Naive thymus-derived CD4-positive, alpha-beta T cell (primary cell): ENCODE measurements at regions of chr11 and their contacts with region 1.

Region 1: DNA sequence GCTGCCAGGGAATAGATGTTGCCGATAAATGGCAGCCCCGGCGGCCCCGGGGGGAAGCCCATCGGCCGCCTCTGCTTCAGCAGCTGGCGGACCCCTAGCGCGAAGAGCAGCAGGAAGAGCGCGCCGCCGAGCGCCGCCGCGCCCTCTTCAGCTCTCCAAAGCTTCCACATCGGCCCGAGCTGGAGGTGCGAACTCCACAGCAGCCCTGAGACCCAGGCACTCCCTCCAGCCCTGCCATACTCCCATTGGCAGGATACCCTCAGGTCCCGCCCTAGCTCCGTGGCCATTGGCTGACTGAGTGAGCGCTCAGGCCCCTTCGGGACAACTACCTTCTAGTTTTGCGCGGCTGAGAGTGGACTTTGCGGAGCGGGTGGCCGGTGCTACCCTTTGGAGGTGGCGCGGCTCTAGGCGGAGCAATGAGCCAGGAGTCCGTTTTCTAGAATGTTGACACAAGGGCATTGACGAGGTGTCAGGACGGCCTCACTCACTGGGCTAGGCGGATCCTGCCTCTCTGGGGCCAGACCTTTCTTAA is at the start of gene CYP2R1:
- DNase-seq: peak in 8 of 9 donors; percentile 76 to 91 (median 89)
- ATAC-seq: peak; percentile 93
- H3K4me3 ChIP-seq: peak within 1 kb of the TSS; percentile 83
- H3K4me3 Mint-ChIP-seq: peak within 1 kb of the TSS; percentile 88 to 99 (median 96)
- H3K27ac ChIP-seq: peak within 1 kb of the TSS; percentile 80
- H3K27ac Mint-ChIP-seq: peak within 1 kb of the TSS; percentile 91 to 98 (median 96)
- H3K4me1 ChIP-seq: peaks cover 3 to 27% of the 10 kb centered on the region in 2 donors
- H3K4me1 Mint-ChIP-seq: peaks cover 17 to 66% (median 44%) of the 10 kb centered on the region in 7 donors
- H3K27me3 ChIP-seq: no peaks in the 10 kb centered on the region
- H3K27me3 Mint-ChIP-seq: no peaks in the 10 kb centered on the region
- total RNA-seq, gene CYP2R1: 13.3 to 18.6 (median 14.7) TPM

Region 2: GRCh38 chr11:13276832-13277767 is 1615.0 kb before region 1 on chr11:
- CTCF ChIA-PET with region 1: no interaction called
- POLR2A ChIA-PET with region 1: no interaction called
- intact Hi-C with region 1: loop called in 1 of 2 experiments (anchors 2 kb)
- DNase-seq: peak; percentile 93 to 97 (median 96)
- ATAC-seq: peak; percentile 91
- H3K4me3 ChIP-seq: peak overlapping the region; percentile 80
- H3K4me3 Mint-ChIP-seq: peak overlapping the region; percentile 95 to 99 (median 97)
- H3K27ac ChIP-seq: peak overlapping the region; percentile 81
- H3K27ac Mint-ChIP-seq: peak overlapping the region; percentile 72 to 97 (median 91)
- H3K4me1 ChIP-seq: peaks cover 19 to 29% of the 10 kb centered on the region in 2 donors
- H3K4me1 Mint-ChIP-seq: peaks cover 32 to 47% (median 40%) of the 10 kb centered on the region in 7 donors
- H3K27me3 ChIP-seq: no peaks in the 10 kb centered on the region
- H3K27me3 Mint-ChIP-seq: peaks cover 0 to 51% (median 0%) of the 10 kb centered on the region in 5 donors

Region 3: GRCh38 chr11:14358729-14359439 is 533.2 kb before region 1 on chr11 and contains the start of gene RRAS2:
- CTCF ChIA-PET with region 1: no interaction called
- POLR2A ChIA-PET with region 1: no interaction called
- intact Hi-C with region 1: loop called (anchors 2 to 5 kb)
- DNase-seq: peak; percentile 67 to 81 (median 78)
- ATAC-seq: peak; percentile 96
- H3K4me3 ChIP-seq: peak within 1 kb of the TSS; percentile 61
- H3K4me3 Mint-ChIP-seq: peak within 1 kb of the TSS; percentile 91 to 98 (median 95)
- H3K27ac ChIP-seq: peak within 1 kb of the TSS; percentile 72
- H3K27ac Mint-ChIP-seq: peak within 1 kb of the TSS; percentile 66 to 93 (median 86)
- H3K4me1 ChIP-seq: peaks cover 7 to 8% of the 10 kb centered on the region in 2 donors
- H3K4me1 Mint-ChIP-seq: peaks cover 25 to 55% (median 30%) of the 10 kb centered on the region in 7 donors
- H3K27me3 ChIP-seq: no peaks in the 10 kb centered on the region
- H3K27me3 Mint-ChIP-seq: peaks cover 0 to 6% (median 0%) of the 10 kb centered on the region in 5 donors
- total RNA-seq, gene RRAS2: 12.6 to 55.3 (median 22.2) TPM

Region 4: GRCh38 chr11:14519917-14520746 is 372.0 kb before region 1 on chr11 and contains the start of gene PSMA1:
- CTCF ChIA-PET with region 1: interaction called, 4 read pairs
- POLR2A ChIA-PET with region 1: interaction called, 15 read pairs
- intact Hi-C with region 1: loop called (anchors 1 kb)
- DNase-seq: peak; percentile 72 to 95 (median 89)
- ATAC-seq: peak; percentile 96
- H3K4me3 ChIP-seq: peak within 1 kb of the TSS; percentile 70
- H3K4me3 Mint-ChIP-seq: peak within 1 kb of the TSS; percentile 86 to 99 (median 97)
- H3K27ac ChIP-seq: peak within 1 kb of the TSS; percentile 96
- H3K27ac Mint-ChIP-seq: peak within 1 kb of the TSS; percentile 93 to 99 (median 96)
- H3K4me1 ChIP-seq: peaks cover 14 to 16% of the 10 kb centered on the region in 2 donors
- H3K4me1 Mint-ChIP-seq: peaks cover 15 to 43% (median 38%) of the 10 kb centered on the region in 7 donors
- H3K27me3 ChIP-seq: no peaks in the 10 kb centered on the region
- H3K27me3 Mint-ChIP-seq: no peaks in the 10 kb centered on the region
- total RNA-seq, gene PSMA1: 103 to 253 (median 120) TPM

Region 5: GRCh38 chr11:14578541-14578956 is 313.6 kb before region 1 on chr11:
- CTCF ChIA-PET with region 1: no interaction called
- POLR2A ChIA-PET with region 1: interaction called, 3 read pairs
- intact Hi-C with region 1: loop called in 1 of 2 experiments (anchors 1 kb)
- DNase-seq: peak in 8 of 9 donors; percentile 57 to 95 (median 92)
- ATAC-seq: peak; percentile 99
- H3K4me3 ChIP-seq: peak overlapping the region; percentile 22
- H3K4me3 Mint-ChIP-seq: peak overlapping the region; percentile 40 to 85 (median 62)
- H3K27ac ChIP-seq: peak overlapping the region; percentile 79
- H3K27ac Mint-ChIP-seq: peak overlapping the region; percentile 92 to 96 (median 95)
- H3K4me1 ChIP-seq: peaks cover 39 to 41% of the 10 kb centered on the region in 2 donors
- H3K4me1 Mint-ChIP-seq: peaks cover 46 to 71% (median 63%) of the 10 kb centered on the region in 7 donors
- H3K27me3 ChIP-seq: no peaks in the 10 kb centered on the region
- H3K27me3 Mint-ChIP-seq: no peaks in the 10 kb centered on the region

Region 6: GRCh38 chr11:14722496-14722895 is 169.6 kb before region 1 on chr11:
- CTCF ChIA-PET with region 1: no interaction called
- POLR2A ChIA-PET with region 1: no interaction called
- intact Hi-C with region 1: no loop called
- DNase-seq: no peak
- ATAC-seq: no peak
- H3K4me3 ChIP-seq: no peak overlapping the region
- H3K4me3 Mint-ChIP-seq: no peak overlapping the region
- H3K27ac ChIP-seq: no peak overlapping the region
- H3K27ac Mint-ChIP-seq: peak overlapping the region in 2 of 9 donors; percentile 58 to 78
- H3K4me1 ChIP-seq: peaks cover 2 to 10% of the 10 kb centered on the region in 2 donors
- H3K4me1 Mint-ChIP-seq: peaks cover 27 to 47% (median 45%) of the 10 kb centered on the region in 7 donors
- H3K27me3 ChIP-seq: no peaks in the 10 kb centered on the region
- H3K27me3 Mint-ChIP-seq: no peaks in the 10 kb centered on the region

Region 7: DNA sequence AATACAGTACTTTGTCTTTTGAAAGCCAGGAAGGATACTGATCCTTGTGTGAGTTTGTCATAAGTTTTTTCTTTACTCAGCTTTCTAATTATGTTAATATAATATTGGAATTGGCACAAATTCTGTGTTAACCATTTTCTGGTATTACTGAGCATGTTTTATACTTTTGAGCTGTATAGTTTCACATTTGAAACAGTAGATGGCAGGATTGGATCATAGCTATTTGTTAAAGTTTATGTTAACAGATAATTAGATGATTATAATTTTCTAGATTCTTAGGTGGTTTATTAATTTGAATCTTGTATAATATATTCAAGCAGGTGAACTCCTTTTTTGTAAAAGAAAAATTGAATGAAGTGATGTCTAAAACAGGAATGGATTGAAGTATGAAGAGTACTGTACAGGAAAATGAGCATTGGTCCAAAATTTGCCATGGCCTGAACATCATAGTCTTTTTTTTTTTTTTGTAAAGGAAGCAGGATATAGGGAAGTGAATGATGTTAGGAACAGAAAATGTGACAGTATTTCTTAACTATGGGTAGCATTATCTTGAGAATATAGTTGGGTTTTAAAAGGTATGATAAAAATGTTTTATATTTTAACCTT is 102.1 kb before region 1 on chr11:
- CTCF ChIA-PET with region 1: interaction called, 13 read pairs
- POLR2A ChIA-PET with region 1: no interaction called
- intact Hi-C with region 1: no loop called
- DNase-seq: peak in 4 of 9 donors; percentile 19 to 37 (median 36)
- ATAC-seq: peak; percentile 42
- H3K4me3 ChIP-seq: no peak overlapping the region
- H3K4me3 Mint-ChIP-seq: no peak overlapping the region
- H3K27ac ChIP-seq: no peak overlapping the region
- H3K27ac Mint-ChIP-seq: peak overlapping the region in 7 of 9 donors; percentile 2 to 74 (median 51)
- H3K4me1 ChIP-seq: no peaks in the 10 kb centered on the region
- H3K4me1 Mint-ChIP-seq: peaks cover 4 to 39% (median 17%) of the 10 kb centered on the region in 7 donors
- H3K27me3 ChIP-seq: no peaks in the 10 kb centered on the region
- H3K27me3 Mint-ChIP-seq: no peaks in the 10 kb centered on the region

Region 8: DNA sequence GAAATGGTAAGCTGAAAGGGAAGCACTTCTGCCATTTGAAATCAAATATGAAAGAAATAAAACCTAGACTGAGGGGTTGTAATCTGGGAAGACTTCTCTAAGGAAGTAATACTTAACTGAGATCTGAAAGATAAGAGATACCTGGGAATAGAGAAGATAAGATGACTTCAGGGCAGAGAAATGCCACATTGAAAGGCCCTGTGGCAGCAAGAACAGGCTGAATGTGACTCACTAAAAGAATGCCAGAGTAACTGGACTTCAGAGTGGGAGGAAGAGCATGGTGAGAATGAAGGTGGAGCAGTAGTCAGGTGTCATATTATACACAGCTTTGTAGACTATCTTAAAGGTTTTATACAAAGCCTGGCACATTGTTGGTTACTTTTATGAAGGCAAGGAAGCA is 62.5 kb after region 1 on chr11:
- CTCF ChIA-PET with region 1: no interaction called
- POLR2A ChIA-PET with region 1: no interaction called
- intact Hi-C with region 1: no loop called
- DNase-seq: no peak
- ATAC-seq: no peak
- H3K4me3 ChIP-seq: no peak overlapping the region
- H3K4me3 Mint-ChIP-seq: no peak overlapping the region
- H3K27ac ChIP-seq: no peak overlapping the region
- H3K27ac Mint-ChIP-seq: peak overlapping the region in 1 of 9 donors; percentile 4
- H3K4me1 ChIP-seq: no peaks in the 10 kb centered on the region
- H3K4me1 Mint-ChIP-seq: peaks cover 0 to 8% (median 0%) of the 10 kb centered on the region in 7 donors
- H3K27me3 ChIP-seq: no peaks in the 10 kb centered on the region
- H3K27me3 Mint-ChIP-seq: peaks cover 0 to 5% (median 0%) of the 10 kb centered on the region in 5 donors